PC-3 (cell line): ENCODE measurements at regions of chr2 and their contacts with region 1.

Region 1: GRCh38 chr2:50143822-50144575 is 887.9 kb downstream of the NRXN1 start:
- DNase-seq: peak; percentile 64
- ATAC-seq: peak; percentile 65
- H3K4me3 ChIP-seq: peak overlapping the region; percentile 77
- H3K27ac ChIP-seq: no peak overlapping the region
- H3K4me1 ChIP-seq: no peaks in the 10 kb centered on the region
- H3K27me3 ChIP-seq: peaks cover 5% of the 10 kb centered on the region; the same call in 1 of the 2 replicates
- CTCF ChIP-seq: peak; percentile 79

Region 2: DNA sequence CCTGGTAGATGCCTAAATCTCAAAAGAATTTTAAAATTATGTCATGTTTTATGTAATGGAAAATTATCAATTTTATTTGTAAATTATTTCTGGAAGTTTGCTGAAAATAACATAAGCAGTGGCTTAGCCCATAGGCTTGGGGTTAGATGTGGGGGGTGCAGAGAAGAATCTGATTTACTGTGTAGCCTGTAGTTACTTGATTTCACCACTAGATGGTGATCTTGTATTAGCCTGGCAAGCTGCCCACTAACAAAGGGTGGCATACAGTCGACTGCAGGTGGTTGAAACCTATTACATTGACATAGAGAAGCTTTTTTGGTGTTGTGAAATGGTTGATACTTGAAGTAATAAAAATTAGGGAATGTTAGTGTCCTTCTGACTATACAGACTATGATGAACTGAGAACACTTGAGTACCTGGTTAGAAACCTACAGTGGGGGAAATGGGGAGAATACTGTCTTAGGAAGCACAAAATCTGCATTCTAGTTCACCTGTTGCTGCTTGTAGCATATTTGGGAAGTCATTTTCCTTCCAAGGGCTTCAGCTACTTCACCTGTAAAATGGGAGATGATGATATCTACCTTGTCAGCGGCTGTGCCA is 1197.5 kb before region 1 on chr2:
- CTCF ChIA-PET with region 1: no interaction called
- POLR2A ChIA-PET with region 1: no interaction called
- intact Hi-C with region 1: loop called (anchors 5 kb)
- DNase-seq: peak; percentile 67
- ATAC-seq: peak; percentile 67
- H3K4me3 ChIP-seq: no peak overlapping the region
- H3K27ac ChIP-seq: no peak overlapping the region
- H3K4me1 ChIP-seq: no peaks in the 10 kb centered on the region
- H3K27me3 ChIP-seq: peaks cover 8% of the 10 kb centered on the region; the same call in 1 of the 2 replicates
- CTCF ChIP-seq: peak; percentile 90

Region 3: DNA sequence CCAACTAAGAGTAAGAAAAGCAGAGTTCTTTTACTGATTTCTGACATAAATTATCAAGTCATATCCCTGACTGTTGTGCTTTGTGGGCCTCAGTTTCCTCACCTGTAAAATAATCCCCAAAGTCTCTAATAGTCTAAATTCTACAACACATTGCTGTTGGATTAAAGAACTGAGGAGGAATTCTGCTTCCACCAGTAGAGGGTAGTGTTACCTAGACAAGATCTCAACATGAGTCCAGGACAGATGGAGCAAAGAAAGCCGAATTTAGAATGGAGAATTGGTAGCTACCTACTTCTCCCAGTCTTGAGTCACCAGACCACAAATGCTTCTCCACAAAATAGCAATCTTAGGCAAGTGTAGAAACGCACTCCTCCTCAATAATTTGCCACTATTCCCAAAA is 527.2 kb before region 1 on chr2:
- CTCF ChIA-PET with region 1: no interaction called
- POLR2A ChIA-PET with region 1: no interaction called
- intact Hi-C with region 1: loop called (anchors 5 kb)
- DNase-seq: peak; percentile 42
- ATAC-seq: no peak
- H3K4me3 ChIP-seq: no peak overlapping the region
- H3K27ac ChIP-seq: no peak overlapping the region
- H3K4me1 ChIP-seq: no peaks in the 10 kb centered on the region
- H3K27me3 ChIP-seq: no peaks in the 10 kb centered on the region
- CTCF ChIP-seq: peak; percentile 55

Region 4: DNA sequence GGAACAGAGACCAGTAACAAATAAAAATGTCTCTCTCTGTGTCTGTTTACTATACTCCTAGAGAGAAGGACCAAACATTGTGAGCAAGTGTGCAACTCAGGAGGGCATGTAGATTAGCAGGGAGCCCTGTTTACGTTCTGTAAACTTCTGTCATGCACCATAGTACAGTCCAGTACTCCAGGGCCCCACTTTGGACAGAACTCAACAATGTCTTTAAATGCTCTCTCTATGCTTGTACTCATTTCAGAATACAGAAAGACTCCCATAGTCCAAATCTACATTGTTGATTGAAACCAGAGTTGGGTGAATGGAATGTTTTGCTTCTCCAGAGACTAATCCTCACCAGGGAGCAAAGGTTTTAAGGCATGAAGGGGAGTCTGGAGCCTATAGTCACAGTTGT is 46.9 kb before region 1 on chr2:
- CTCF ChIA-PET with region 1: no interaction called
- POLR2A ChIA-PET with region 1: no interaction called
- intact Hi-C with region 1: no loop called
- DNase-seq: no peak
- ATAC-seq: no peak
- H3K4me3 ChIP-seq: no peak overlapping the region
- H3K27ac ChIP-seq: no peak overlapping the region
- H3K4me1 ChIP-seq: no peaks in the 10 kb centered on the region
- H3K27me3 ChIP-seq: no peaks in the 10 kb centered on the region
- CTCF ChIP-seq: no peak